H1 (cell line): ENCODE measurements at regions of chr9 and their contacts with region 1.

Region 1: DNA sequence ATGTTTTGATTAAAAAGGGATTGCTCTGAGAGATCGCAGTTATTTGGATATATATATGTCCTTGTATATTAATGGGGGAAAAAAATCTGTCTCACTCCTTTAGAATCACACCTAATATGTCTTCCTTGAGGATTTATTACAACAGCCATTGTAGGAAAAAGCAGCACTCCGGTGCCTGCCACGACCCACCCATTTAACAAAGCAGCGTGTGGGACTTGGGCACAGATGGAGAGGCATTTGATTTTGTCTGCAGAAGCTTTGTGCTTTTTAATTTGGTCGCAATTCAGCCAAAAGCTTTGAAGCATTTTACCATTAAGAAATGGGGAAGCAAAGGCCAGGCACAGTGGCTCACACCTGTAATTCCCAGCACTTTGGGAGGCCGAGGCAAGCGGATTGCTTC is 159.2 kb downstream of the SMARCA2 start:
- DNase-seq: no peak
- H3K4me3 ChIP-seq: no peak overlapping the region
- H3K27ac ChIP-seq: no peak overlapping the region
- H3K4me1 ChIP-seq: peaks cover 0 to 7% (median 4%) of the 10 kb centered on the region in 4 experiments; a peak in 3 of 7 replicates
- H3K27me3 ChIP-seq: no peaks in the 10 kb centered on the region
- CTCF ChIP-seq: no peak
- EP300 ChIP-seq: no peak
- POLR2A ChIP-seq: no peak
- RAD21 ChIP-seq: no peak

Region 2: DNA sequence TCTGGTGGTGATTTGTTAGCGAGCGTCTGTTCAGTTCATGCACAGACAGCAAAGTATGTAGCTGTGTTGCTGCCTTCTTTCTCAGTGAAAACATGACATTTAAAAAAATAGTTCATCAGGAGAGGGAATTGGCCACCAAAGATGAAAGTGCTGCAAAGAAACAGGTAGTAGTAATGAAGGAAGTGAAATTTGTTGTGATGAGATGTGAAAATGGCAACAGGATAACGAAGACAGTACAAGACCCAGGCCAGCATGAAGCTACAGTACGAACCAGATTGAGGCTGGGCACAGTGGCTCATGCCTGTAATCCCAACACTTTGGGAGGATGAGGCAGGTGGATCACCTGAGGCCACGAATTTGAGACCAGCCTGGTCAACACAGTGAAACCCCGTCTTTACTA is 23.1 kb before region 1 on chr9:
- CTCF ChIA-PET with region 1: interaction called, 11 read pairs
- POLR2A ChIA-PET with region 1: no interaction called
- DNase-seq: no peak
- H3K4me3 ChIP-seq: no peak overlapping the region
- H3K27ac ChIP-seq: no peak overlapping the region
- H3K4me1 ChIP-seq: no peaks in the 10 kb centered on the region
- H3K27me3 ChIP-seq: no peaks in the 10 kb centered on the region
- CTCF ChIP-seq: no peak
- EP300 ChIP-seq: no peak
- POLR2A ChIP-seq: no peak
- RAD21 ChIP-seq: no peak

Region 3: DNA sequence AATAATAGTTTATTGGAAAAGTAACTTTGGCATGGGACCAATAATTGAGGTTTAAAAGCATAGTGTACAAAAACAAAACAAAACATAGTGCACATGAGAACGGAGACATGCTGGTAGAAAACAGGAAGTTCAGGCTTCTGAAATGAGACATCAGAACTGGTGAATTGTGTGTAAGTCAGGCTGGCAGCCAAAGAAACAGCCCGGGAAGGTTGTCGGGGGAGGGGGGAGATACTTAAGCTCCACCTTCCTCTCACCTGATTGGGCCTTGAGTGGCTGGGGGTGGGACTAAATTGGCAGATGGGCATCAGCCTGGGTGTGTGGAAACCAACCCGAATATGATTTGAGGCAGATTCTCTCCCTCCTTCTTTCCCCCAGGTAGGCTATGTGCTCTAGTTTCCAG is 97.1 kb after region 1 on chr9:
- CTCF ChIA-PET with region 1: no interaction called
- POLR2A ChIA-PET with region 1: no interaction called
- DNase-seq: peak in 1 of 2 experiments; percentile 53
- H3K4me3 ChIP-seq: no peak overlapping the region
- H3K27ac ChIP-seq: no peak overlapping the region
- H3K4me1 ChIP-seq: peaks cover 0 to 6% (median 3%) of the 10 kb centered on the region in 4 experiments; a peak in 3 of 7 replicates
- H3K27me3 ChIP-seq: no peaks in the 10 kb centered on the region
- CTCF ChIP-seq: no peak
- EP300 ChIP-seq: no peak
- POLR2A ChIP-seq: no peak
- RAD21 ChIP-seq: no peak